OCI-LY7 (cell line): ENCODE measurements at regions of chr20 and their contacts with region 1.

Region 1: GRCh38 chr20:46689082-46689754 is at the start of gene TP53RK:
- DNase-seq: peak; percentile 98
- H3K4me3 ChIP-seq: peak within 1 kb of the TSS; percentile 74
- H3K27ac ChIP-seq: peak within 1 kb of the TSS; percentile 63
- H3K4me1 ChIP-seq: peaks cover 30% of the 10 kb centered on the region
- CTCF ChIP-seq: 0 out of 2 replicates have a peak, but pooled peaks have one; percentile 20
- total RNA-seq, gene TP53RK: 25.2 and 32.9 TPM in 2 replicates

Region 2: DNA sequence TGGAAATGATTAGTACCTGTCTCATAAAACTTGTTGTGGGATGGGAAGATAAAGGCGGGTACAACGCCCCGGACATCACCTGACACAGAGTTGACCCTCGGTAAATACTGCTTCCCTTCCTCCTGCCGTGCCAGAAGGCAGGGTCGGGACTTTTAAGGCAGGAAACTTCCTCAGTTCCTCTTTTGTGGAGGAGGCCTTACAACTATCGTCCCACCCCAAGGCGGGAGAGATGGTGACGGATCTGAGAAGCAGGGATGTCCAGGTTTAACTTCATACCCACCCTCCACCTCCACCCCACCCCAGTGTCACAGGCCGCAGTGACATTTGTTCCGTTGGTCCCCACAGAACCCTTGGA is 896.9 kb before region 1 on chr20:
- CTCF ChIA-PET with region 1: no interaction called
- POLR2A ChIA-PET with region 1: no interaction called
- intact Hi-C with region 1: loop called (anchors 5 kb)
- DNase-seq: peak; percentile 37
- H3K4me3 ChIP-seq: peak overlapping the region; percentile 97
- H3K27ac ChIP-seq: peak overlapping the region; percentile 44
- H3K4me1 ChIP-seq: peaks cover 8% of the 10 kb centered on the region
- CTCF ChIP-seq: no peak

Region 3: DNA sequence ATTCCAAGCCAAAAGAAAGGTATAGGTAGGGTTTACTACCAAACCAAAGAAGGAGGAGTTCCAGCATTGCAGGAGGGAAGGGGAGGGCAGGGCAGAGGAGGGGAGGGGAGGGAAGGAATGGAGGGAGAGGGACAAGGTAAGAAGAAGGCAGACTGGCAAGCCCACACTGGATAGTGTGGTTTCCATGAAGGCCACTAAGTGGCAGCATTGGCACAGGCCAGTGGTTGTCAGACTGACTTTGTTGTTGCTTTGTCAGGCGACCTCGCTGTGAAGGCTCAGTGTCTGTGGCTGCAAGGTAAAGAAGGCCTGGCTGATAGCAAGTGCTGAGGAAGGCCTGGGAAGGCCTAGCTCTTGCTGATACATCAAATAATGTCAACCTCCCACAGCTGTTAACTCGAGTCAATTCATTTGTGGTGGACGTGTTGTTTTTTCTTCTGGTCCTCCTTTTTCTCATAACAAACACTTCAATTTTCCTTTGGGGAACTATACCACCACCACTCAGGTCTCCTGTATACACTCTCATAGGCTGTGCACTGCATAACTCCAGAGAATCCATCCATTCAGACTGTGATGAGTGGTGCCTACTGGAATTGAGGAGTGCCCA is 168.1 kb before region 1 on chr20:
- CTCF ChIA-PET with region 1: no interaction called
- POLR2A ChIA-PET with region 1: no interaction called
- intact Hi-C with region 1: no loop called
- DNase-seq: peak; percentile 49
- H3K4me3 ChIP-seq: no peak overlapping the region
- H3K27ac ChIP-seq: no peak overlapping the region
- H3K4me1 ChIP-seq: no peaks in the 10 kb centered on the region
- CTCF ChIP-seq: peak; percentile 68